SK-N-SH (cell line): ENCODE measurements at regions of chr10 and their contacts with region 1.

Region 1: DNA sequence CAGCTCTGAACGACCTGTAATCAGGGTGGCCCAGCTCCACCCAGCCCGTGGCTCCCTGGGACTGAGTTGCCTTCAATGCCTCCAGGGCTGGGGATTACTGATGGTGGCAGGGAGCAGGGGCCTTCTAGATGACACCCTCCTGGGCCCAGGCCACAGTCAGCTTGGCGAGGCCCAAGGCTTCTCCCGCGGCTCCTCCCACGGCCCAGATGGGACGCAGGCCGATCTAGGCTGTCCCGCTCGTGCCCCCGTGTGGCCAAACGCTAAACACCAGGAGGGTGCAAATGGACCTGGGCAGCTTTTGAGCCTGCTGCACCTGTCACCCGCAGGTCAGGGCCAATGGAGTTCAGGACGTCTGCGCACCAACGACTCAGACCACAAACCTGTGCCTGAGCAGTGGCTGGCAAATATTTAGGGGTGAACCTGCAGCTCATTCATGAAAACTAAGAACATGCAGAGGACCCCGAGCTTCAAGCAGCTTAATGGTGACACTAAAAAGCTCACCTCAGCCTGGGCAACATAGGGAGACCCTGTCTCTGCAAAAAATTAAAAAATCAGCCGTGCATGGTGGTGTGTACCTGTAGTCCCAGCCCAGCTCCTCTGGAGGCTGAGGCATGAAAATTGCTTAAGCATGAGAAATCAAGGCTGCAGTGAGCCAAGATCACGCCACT is 43.2 kb downstream of the ASB13 start:
- DNase-seq: peak; percentile 91
- H3K4me3 ChIP-seq: no peak overlapping the region
- H3K27ac ChIP-seq: peak overlapping the region in 1 of 2 experiments; percentile 58; a peak in 2 of 4 replicates
- H3K4me1 ChIP-seq: peaks cover 7 to 19% of the 10 kb centered on the region in 2 experiments; a peak in 2 of 4 replicates
- H3K27me3 ChIP-seq: no peaks in the 10 kb centered on the region
- CTCF ChIP-seq: peak; percentile 90
- EP300 ChIP-seq: no peak
- RAD21 ChIP-seq: peak; percentile 91

Region 2: GRCh38 chr10:5446390-5446926 is 176.8 kb before region 1 on chr10:
- CTCF ChIA-PET with region 1: interaction called, 449 read pairs
- POLR2A ChIA-PET with region 1: interaction called, 5 read pairs
- DNase-seq: no peak
- H3K4me3 ChIP-seq: no peak overlapping the region
- H3K27ac ChIP-seq: 0 out of 4 replicates have a peak overlapping the region, but pooled peaks of 1 of the 2 experiments have one; percentile 22
- H3K4me1 ChIP-seq: peaks cover 2 to 23% of the 10 kb centered on the region in 2 experiments; a peak in 3 of 4 replicates
- H3K27me3 ChIP-seq: no peaks in the 10 kb centered on the region
- CTCF ChIP-seq: no peak
- EP300 ChIP-seq: no peak
- RAD21 ChIP-seq: no peak

Region 3: DNA sequence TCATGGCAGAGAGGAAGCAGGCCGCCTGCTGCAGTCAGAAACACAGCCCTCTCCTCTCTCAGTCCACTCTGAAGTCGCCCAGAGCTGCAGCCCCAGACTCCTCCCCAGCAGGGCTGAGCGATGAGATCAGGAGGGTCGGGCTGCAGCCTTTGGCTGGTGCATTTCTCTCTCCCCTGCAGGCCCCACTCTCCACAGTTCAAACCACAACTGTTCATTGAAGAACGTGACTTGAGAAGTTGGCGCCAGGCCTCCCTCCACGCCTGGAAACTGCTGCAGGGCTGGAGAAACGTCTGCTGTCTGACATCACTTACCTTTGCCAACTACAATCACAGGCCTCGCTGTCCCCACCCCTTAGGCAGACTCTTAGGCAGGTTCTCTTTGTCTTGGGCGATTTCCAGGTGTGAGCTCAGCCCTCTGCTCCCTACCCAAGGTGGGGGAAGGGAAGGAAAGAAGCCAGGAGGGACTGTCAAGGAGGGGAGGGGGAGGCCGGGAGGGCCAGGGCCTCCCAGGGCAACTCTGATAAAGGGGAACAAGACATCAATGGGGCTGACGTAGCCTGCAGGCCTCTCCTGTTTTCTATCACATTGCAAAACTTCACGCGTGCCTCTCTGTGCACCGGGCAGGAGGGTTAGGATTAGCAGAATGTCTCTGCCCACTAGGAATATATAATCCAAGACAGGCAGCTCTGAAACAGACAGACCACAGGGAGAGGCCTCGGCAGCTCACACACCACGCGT is 156.6 kb before region 1 on chr10:
- CTCF ChIA-PET with region 1: interaction called, 34 read pairs
- POLR2A ChIA-PET with region 1: no interaction called
- DNase-seq: no peak
- H3K4me3 ChIP-seq: no peak overlapping the region
- H3K27ac ChIP-seq: no peak overlapping the region; a peak in 1 of 4 replicates
- H3K4me1 ChIP-seq: peaks cover 0 to 8% of the 10 kb centered on the region in 2 experiments; a peak in 1 of 4 replicates
- H3K27me3 ChIP-seq: no peaks in the 10 kb centered on the region
- CTCF ChIP-seq: no peak
- EP300 ChIP-seq: no peak
- RAD21 ChIP-seq: no peak

Region 4: DNA sequence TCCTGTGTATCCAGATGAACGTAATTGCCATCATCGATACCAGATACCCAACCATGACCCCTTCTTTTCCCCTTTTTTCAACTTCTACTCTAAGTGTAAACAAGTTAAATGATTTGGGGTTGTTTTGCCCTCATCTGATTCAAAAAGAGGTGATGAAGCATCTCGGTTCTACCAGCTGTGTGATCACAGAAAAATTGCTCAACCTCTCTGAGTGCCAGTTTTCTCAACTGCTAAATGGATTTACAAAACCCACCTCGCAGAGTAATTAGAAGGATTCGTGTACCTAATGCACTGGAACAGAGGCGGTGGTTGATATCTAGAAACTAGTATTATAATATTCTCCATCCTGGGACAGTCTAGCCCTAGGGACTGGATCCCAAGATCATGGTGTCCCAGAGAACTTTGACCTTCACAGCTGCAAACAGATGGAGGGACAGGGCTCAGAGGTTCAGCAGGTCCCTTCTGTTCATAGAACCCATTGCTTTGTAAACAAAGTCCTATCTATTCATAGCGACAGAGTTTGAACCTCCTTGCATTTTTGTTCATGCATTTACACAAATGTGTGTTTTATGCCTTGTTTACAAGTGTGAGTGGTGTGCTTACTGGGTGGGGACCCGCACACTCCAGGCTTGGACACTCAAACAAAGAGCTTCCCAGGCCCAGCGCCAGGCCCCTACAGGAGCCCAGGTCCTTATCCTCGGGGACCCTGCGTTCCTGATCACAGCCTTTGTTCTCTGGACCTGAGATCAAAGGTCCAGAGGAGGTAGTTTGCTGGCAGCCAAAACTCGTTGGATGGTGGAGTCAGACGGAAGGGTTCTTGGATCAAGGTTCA is 52.0 kb before region 1 on chr10:
- CTCF ChIA-PET with region 1: interaction called, 14 read pairs
- POLR2A ChIA-PET with region 1: no interaction called
- DNase-seq: no peak
- H3K4me3 ChIP-seq: no peak overlapping the region
- H3K27ac ChIP-seq: no peak overlapping the region
- H3K4me1 ChIP-seq: peaks cover 4 to 26% of the 10 kb centered on the region in 2 experiments; a peak in 2 of 4 replicates
- H3K27me3 ChIP-seq: no peaks in the 10 kb centered on the region
- CTCF ChIP-seq: no peak
- EP300 ChIP-seq: no peak
- RAD21 ChIP-seq: no peak

Region 5: DNA sequence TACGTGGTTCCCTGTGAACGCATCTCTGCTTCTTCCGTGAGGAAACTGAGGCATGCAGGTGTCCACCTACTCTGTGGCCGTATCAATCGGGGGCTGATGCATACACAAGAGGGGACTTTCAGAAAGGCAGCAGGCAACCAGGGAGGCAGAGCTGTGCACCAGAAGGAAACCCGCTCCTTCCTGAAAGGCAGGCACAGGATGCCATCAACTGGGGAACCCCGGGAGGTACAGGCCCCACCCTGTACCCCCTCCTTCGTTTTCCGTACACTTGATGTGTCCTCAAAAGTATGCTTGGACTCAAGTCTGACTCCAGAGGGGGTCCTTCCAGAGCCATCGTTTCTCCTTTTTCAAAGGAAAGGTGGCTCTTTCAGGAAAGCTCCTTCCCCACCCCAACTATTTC is 16.4 kb before region 1 on chr10:
- CTCF ChIA-PET with region 1: interaction called, 10 read pairs
- POLR2A ChIA-PET with region 1: no interaction called
- DNase-seq: no peak
- H3K4me3 ChIP-seq: no peak overlapping the region
- H3K27ac ChIP-seq: no peak overlapping the region
- H3K4me1 ChIP-seq: no peaks in the 10 kb centered on the region; a peak in 1 of 4 replicates
- H3K27me3 ChIP-seq: no peaks in the 10 kb centered on the region
- CTCF ChIP-seq: no peak
- EP300 ChIP-seq: no peak
- RAD21 ChIP-seq: 0 out of 2 replicates have a peak, but pooled peaks have one; percentile 7

Region 6: DNA sequence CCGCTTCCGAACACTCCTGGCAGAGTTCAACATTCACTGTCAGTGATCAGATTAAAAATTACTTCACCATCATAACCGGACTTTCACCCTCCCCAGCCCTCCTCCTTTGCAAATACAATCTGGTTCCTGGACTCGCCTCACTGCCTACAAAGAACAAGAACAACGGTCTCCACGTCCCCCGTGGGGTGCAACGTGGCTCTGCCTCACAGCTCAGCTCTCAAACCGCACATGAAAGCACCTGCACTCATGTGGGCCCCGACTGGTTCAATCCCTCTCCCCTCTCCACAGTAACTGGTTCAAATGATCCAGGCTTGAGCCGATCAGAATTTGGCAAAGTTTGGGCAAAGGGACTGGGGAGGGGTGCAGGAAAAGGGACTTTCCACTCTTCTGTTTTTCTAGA is 22.2 kb after region 1 on chr10:
- CTCF ChIA-PET with region 1: interaction called, 17 read pairs
- POLR2A ChIA-PET with region 1: no interaction called
- DNase-seq: no peak
- H3K4me3 ChIP-seq: no peak overlapping the region
- H3K27ac ChIP-seq: no peak overlapping the region
- H3K4me1 ChIP-seq: no peaks in the 10 kb centered on the region; a peak in 1 of 4 replicates
- H3K27me3 ChIP-seq: no peaks in the 10 kb centered on the region
- CTCF ChIP-seq: no peak
- EP300 ChIP-seq: no peak
- RAD21 ChIP-seq: no peak

Region 7: GRCh38 chr10:5840314-5841307 is 217.4 kb after region 1 on chr10:
- CTCF ChIA-PET with region 1: no interaction called
- POLR2A ChIA-PET with region 1: no interaction called
- DNase-seq: no peak
- H3K4me3 ChIP-seq: no peak overlapping the region
- H3K27ac ChIP-seq: no peak overlapping the region
- H3K4me1 ChIP-seq: no peaks in the 10 kb centered on the region; a peak in 1 of 4 replicates
- H3K27me3 ChIP-seq: no peaks in the 10 kb centered on the region
- CTCF ChIP-seq: no peak
- EP300 ChIP-seq: no peak
- RAD21 ChIP-seq: no peak